ENCODE measurements at regions of chr3 and their contacts with region 1.

Region 1: DNA sequence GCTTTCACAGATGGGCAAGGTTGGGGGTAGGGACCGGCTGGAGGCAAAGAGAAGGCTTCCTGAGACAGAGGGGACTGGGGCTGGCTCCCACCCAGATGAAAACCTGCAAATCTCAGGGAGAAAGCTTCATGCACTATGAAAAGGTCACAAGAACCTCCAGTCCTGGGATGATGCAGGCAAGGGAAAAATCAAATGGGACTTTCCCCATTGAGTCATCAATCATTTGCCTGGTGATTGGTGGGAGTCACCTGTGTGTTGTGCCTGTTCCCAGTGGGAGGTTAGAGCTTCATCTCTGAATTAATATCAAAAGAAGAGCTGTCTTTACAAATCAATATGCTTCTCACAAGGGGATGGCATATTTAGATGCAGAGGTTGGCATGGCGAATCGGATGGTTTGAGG is 49.9 kb downstream of the CACNA1D start:
- DNase-seq: no peak
- H3K4me3 Mint-ChIP-seq: no peak overlapping the region
- H3K27ac Mint-ChIP-seq: no peak overlapping the region
- H3K4me1 Mint-ChIP-seq: no peaks in the 10 kb centered on the region
- H3K27me3 Mint-ChIP-seq: no peaks in the 10 kb centered on the region

Region 2: DNA sequence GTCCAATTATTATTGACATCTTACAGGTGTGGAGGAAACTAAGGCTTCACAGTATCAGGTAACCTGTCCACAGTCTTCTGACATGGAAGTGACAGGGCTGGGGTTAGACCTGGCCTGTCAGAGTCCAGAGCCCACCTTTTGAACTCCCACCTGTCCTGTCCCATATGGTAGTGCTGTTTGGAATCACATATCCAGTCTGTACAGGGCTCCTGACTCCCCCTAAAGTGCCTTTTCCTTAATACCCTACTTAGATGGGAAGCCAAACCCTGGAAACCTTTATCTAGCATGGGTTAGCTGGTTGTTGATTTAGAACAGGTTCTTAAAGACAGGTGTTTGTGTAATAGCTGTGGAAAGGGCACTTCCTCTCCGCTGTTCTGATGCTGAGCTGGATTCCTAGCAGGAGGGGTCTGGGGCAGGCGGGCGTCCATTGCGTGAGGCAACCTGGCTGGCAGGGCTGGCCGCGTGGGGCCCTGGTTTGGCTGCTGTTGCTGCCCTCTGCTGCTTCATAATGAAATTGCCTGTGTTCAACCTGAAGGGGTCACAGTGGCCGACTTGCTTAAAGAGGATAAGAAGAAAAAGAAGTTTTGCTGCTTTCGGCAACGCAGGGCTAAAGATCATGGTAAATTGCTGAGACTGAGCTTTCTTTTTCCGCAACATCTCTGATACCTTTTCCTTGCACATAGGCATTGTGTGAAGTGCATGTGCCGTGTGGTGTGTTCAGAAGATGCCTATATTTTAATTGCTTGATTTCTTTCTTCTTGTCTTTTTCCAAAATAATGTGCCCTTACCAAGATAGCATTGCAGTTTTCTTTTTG is 165.7 kb after region 1 on chr3:
- intact Hi-C with region 1: loop called (anchors 10 kb)
- DNase-seq: peak; percentile 45
- H3K4me3 Mint-ChIP-seq: no peak overlapping the region
- H3K27ac Mint-ChIP-seq: no peak overlapping the region
- H3K4me1 Mint-ChIP-seq: peaks cover 27% of the 10 kb centered on the region
- H3K27me3 Mint-ChIP-seq: peaks cover 7% of the 10 kb centered on the region

Region 3: DNA sequence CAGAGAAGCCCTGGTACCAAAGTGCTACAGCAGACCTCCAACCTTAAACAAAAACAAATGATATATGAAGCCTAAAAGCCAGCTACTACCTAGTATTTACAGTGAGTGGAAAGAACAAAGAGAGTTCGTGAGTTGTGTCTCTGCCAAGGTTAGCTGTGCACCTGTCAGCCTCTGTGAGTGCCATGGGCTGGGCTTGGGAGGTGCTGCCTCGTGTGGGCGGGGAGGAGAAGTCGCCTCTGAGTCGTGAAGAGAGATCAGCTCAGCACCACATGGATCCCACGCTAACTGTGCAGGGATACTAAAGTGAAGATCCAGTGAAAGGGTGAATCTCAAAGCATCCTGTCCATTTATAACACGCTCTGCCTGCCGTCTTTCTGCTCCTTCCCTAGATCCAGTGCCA is 200.0 kb after region 1 on chr3:
- intact Hi-C with region 1: no loop called
- DNase-seq: no peak
- H3K4me3 Mint-ChIP-seq: no peak overlapping the region
- H3K27ac Mint-ChIP-seq: no peak overlapping the region
- H3K4me1 Mint-ChIP-seq: peaks cover 18% of the 10 kb centered on the region
- H3K27me3 Mint-ChIP-seq: peaks cover 37% of the 10 kb centered on the region